Psoas muscle (tissue), 8 donors: ENCODE measurements at regions of chr18 and their contacts with region 1.

Region 1: DNA sequence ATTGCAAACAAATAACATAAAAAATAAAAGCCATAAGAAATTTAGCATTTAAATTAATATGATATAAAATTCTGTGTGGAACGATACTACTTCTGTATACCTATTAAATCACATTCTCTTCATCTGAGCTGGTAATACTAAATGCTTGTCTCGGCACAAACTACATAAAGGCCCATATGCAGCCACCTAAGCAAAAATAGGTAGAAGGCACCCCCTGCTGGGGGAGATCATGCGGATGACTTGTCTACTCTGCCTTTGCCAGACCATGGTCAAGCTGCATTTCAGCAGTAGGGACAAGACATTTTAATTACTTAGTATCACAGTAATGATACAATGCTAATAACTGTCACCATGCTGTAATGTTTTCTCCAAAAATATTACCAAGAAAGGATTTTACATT is 108.0 kb downstream of the CDH19 start:
- DNase-seq: peak; percentile 20 to 51
- ATAC-seq: peak; percentile 39 to 76 (median 60)
- H3K4me3 ChIP-seq: no peak overlapping the region
- H3K27ac ChIP-seq: no peak overlapping the region
- H3K4me1 ChIP-seq: no peaks in the 10 kb centered on the region
- H3K27me3 ChIP-seq: no peaks in the 10 kb centered on the region
- CTCF ChIP-seq: peak; percentile 32

Region 2: DNA sequence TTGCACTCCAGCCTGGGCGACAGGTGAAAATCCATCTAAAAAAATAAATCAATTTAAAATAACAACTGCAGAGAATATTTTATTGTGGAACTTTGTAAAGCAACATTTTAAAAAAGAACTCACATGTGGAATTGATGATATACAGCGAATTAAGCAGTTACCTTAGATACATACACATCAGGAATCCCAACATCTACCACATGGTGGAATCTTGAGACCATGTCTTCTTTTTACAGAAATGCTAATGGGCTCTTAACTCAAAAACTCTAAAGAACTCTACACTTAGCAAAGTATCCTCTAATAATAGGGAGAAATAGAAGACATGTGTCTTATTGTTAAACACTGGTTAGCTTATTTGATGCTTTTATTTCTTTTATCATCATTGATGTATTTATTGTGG is 371.4 kb before region 1 on chr18:
- intact Hi-C with region 1: loop called in 1 of 2 experiments (anchors 5 kb)
- DNase-seq: no peak
- ATAC-seq: peak in 1 of 4 donors; percentile 51
- H3K4me3 ChIP-seq: no peak overlapping the region
- H3K27ac ChIP-seq: no peak overlapping the region
- H3K4me1 ChIP-seq: no peaks in the 10 kb centered on the region
- H3K27me3 ChIP-seq: no peaks in the 10 kb centered on the region
- CTCF ChIP-seq: peak; percentile 23